T-cell (primary cell): ENCODE measurements at regions of chrX and their contacts with region 1.

Region 1: DNA sequence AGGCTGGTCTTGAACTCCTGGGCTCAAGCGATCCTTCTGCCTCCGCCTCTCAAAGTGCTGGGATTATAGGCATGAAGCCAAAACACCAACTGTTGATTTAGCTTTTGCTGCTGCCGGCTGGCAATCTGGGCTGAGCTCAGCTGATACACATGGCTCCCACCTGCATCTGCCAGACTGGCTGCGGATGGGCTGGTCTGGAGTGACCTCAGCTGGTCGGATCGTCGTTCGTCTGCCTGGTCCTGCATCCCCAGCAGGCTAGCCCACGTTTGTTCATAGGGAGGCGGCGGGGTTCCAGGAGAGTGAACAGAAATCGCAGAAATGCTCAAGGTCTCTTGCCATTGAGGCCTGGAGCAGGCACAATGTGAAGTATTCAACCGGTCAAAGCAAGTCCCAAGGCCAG is 74.4 kb upstream of the DDX3X start:
- DNase-seq: no peak
- ATAC-seq: no peak
- H3K4me3 ChIP-seq: no peak overlapping the region
- H3K4me3 Mint-ChIP-seq: no peak overlapping the region
- H3K27ac ChIP-seq: no peak overlapping the region
- H3K27ac Mint-ChIP-seq: no peak overlapping the region
- H3K4me1 ChIP-seq: no peaks in the 10 kb centered on the region
- H3K4me1 Mint-ChIP-seq: no peaks in the 10 kb centered on the region
- H3K27me3 ChIP-seq: no peaks in the 10 kb centered on the region
- H3K27me3 Mint-ChIP-seq: peaks cover 0 to 20% of the 10 kb centered on the region in 2 donors

Region 2: GRCh38 chrX:41043674-41044345 is 215.7 kb before region 1 on chrX:
- CTCF ChIA-PET with region 1: interaction called in 1 of 2 experiments, 10 read pairs
- POLR2A ChIA-PET with region 1: no interaction called
- DNase-seq: no peak
- ATAC-seq: no peak
- H3K4me3 ChIP-seq: no peak overlapping the region
- H3K4me3 Mint-ChIP-seq: no peak overlapping the region
- H3K27ac ChIP-seq: no peak overlapping the region
- H3K27ac Mint-ChIP-seq: no peak overlapping the region
- H3K4me1 ChIP-seq: no peaks in the 10 kb centered on the region
- H3K4me1 Mint-ChIP-seq: peaks cover 0 to 5% (median 3%) of the 10 kb centered on the region in 3 donors
- H3K27me3 ChIP-seq: no peaks in the 10 kb centered on the region
- H3K27me3 Mint-ChIP-seq: peaks cover 0 to 8% of the 10 kb centered on the region in 2 donors

Region 3: DNA sequence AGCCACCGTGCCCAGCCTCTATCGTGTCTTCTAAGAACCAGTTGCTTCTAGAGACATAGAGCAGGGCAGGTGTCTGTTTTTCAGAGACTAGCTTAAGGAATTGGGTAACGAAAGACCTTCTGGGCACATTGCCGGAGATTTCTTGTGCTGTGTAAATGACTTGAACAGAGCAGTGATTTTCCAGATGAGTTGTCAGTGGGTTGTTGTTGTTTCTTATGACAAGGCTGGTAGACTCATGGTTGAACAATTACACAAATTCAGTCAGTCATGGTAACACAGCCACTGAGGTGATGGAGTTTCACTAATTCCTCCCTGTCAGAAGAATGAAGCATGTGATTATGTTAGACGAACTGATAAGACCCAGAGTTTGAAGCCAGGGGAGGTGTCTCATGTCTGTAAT is 53.9 kb after region 1 on chrX:
- CTCF ChIA-PET with region 1: no interaction called
- POLR2A ChIA-PET with region 1: no interaction called
- DNase-seq: no peak
- ATAC-seq: no peak
- H3K4me3 ChIP-seq: no peak overlapping the region
- H3K4me3 Mint-ChIP-seq: no peak overlapping the region
- H3K27ac ChIP-seq: no peak overlapping the region
- H3K27ac Mint-ChIP-seq: no peak overlapping the region
- H3K4me1 ChIP-seq: no peaks in the 10 kb centered on the region
- H3K4me1 Mint-ChIP-seq: peaks cover 0 to 3% (median 0%) of the 10 kb centered on the region in 3 donors
- H3K27me3 ChIP-seq: no peaks in the 10 kb centered on the region
- H3K27me3 Mint-ChIP-seq: no peaks in the 10 kb centered on the region